GM12878 (cell line): ENCODE measurements at regions of chr6 and their contacts with region 1.

Region 1: DNA sequence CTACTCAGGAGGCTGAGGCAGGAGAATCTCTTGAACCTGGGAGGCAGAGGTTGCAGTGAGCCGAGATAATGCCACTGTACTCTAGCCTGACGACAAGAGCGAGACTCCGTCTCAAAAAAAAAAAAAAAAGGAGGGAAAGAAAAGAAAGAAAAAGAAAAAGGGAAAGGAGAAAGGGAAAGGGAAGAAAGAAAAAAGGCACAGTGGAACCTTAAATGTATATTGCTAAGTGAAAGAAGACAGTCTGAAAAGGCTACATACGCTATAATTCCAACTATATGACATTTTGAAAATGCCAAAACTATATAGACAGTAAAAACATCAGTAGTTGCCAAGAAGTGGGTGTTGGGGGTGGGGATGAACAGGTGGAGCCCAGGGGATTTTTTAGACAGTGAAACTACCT is 16.2 kb downstream of the PPIL4 start:
- DNase-seq: no peak
- ATAC-seq: no peak
- H3K4me3 ChIP-seq: no peak overlapping the region
- H3K27ac ChIP-seq: no peak overlapping the region
- H3K4me1 ChIP-seq: no peaks in the 10 kb centered on the region
- H3K27me3 ChIP-seq: no peaks in the 10 kb centered on the region
- CTCF ChIP-seq: no peak
- EP300 ChIP-seq: no peak
- POLR2A ChIP-seq: no peak
- RAD21 ChIP-seq: no peak

Region 2: GRCh38 chr6:149405823-149406765 is 123.6 kb before region 1 on chr6:
- CTCF ChIA-PET with region 1: no interaction called
- POLR2A ChIA-PET with region 1: no interaction called
- RAD21 ChIA-PET with region 1: no interaction called
- SMC1A ChIA-PET with region 1: no interaction called
- in situ Hi-C with region 1: no loop called
- intact Hi-C with region 1: no loop called
- DNase-seq: no peak
- ATAC-seq: no peak
- H3K4me3 ChIP-seq: no peak overlapping the region
- H3K27ac ChIP-seq: no peak overlapping the region
- H3K4me1 ChIP-seq: no peaks in the 10 kb centered on the region
- H3K27me3 ChIP-seq: no peaks in the 10 kb centered on the region
- CTCF ChIP-seq: no peak
- EP300 ChIP-seq: no peak
- POLR2A ChIP-seq: no peak
- RAD21 ChIP-seq: no peak

Region 3: GRCh38 chr6:149545754-149546528 is 16.3 kb after region 1 on chr6 and contains the start of gene PPIL4:
- CTCF ChIA-PET with region 1: interaction called, 10 read pairs
- POLR2A ChIA-PET with region 1: interaction called, 6 read pairs
- RAD21 ChIA-PET with region 1: no interaction called
- SMC1A ChIA-PET with region 1: interaction called, 4 read pairs
- in situ Hi-C with region 1: no loop called
- intact Hi-C with region 1: no loop called
- DNase-seq: peak; percentile 71
- ATAC-seq: peak; percentile 92
- H3K4me3 ChIP-seq: peak within 1 kb of the TSS; percentile 92
- H3K27ac ChIP-seq: peak within 1 kb of the TSS; percentile 87
- H3K4me1 ChIP-seq: no peaks in the 10 kb centered on the region; the same call in 1 of the 2 replicates
- H3K27me3 ChIP-seq: no peaks in the 10 kb centered on the region; a peak in 1 of 4 replicates
- CTCF ChIP-seq: peak; percentile 74 to 89 (median 75)
- EP300 ChIP-seq: 0 out of 4 replicates have a peak, but pooled peaks of 1 of the 2 experiments have one; percentile 21
- POLR2A ChIP-seq: peak; percentile 94
- RAD21 ChIP-seq: peak; percentile 59
- polyA plus RNA-seq, gene PPIL4: 24.7 to 25.9 TPM